GM12878 (cell line): ENCODE measurements at regions of chr2 and their contacts with region 1.

Region 1: GRCh38 chr2:96801005-96801785 is 14.9 kb upstream of the CNNM3 start:
- DNase-seq: no peak
- ATAC-seq: peak; percentile 98
- H3K4me3 ChIP-seq: no peak overlapping the region
- H3K27ac ChIP-seq: no peak overlapping the region
- H3K4me1 ChIP-seq: peaks cover 18% of the 10 kb centered on the region
- H3K27me3 ChIP-seq: no peaks in the 10 kb centered on the region
- CTCF ChIP-seq: peak; percentile 90 to 93 (median 91)
- EP300 ChIP-seq: no peak
- POLR2A ChIP-seq: no peak
- RAD21 ChIP-seq: peak; percentile 82

Region 2: DNA sequence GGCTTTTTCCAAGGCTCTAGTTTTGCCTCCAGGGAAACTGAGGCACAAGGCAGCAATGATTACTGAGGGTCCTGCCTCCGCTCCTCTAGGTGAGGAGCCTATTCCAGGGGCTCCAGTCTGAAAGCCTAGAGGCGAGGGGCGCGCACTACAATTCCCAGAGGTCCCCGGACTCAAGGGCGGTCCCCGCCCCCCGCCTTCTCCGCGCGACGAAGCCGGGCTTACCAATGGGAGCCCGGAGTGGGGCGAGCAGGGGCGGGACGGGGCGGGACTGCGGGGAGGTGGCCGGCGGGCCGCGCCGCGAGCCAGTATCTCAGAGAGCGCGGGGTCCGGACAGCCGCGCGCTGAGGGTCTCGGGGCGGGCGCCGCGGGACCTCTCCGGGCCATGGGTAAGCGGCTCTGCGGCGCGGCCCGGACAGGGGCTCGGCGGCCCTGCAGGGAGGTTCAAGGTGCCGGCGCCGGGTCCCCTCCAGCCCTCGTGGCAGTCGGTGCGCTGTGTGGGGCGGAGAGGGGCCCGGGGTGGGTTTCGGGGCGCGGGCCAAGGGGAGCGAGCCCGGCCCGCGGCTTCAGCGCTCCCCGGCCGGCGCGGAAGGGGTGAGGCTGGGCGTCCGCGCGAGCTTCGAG is 264.6 kb before region 1 on chr2 and contains the start of gene ARID5A:
- CTCF ChIA-PET with region 1: no interaction called
- POLR2A ChIA-PET with region 1: no interaction called
- RAD21 ChIA-PET with region 1: no interaction called
- SMC1A ChIA-PET with region 1: no interaction called
- in situ Hi-C with region 1: no loop called
- intact Hi-C with region 1: no loop called
- DNase-seq: peak; percentile 44
- ATAC-seq: peak; percentile 78
- H3K4me3 ChIP-seq: peak within 1 kb of the TSS; percentile 94
- H3K27ac ChIP-seq: peak within 1 kb of the TSS; percentile 92
- H3K4me1 ChIP-seq: peaks cover 43% of the 10 kb centered on the region
- H3K27me3 ChIP-seq: no peaks in the 10 kb centered on the region
- CTCF ChIP-seq: peak in 1 of 3 experiments; percentile 26; a peak in 1 of 6 replicates
- EP300 ChIP-seq: no peak
- POLR2A ChIP-seq: peak; percentile 90
- RAD21 ChIP-seq: no peak
- polyA plus RNA-seq, gene ARID5A: 0.76 to 3.8 TPM

Region 3: GRCh38 chr2:96638144-96639121 is 162.8 kb before region 1 on chr2 and contains the start of gene KANSL3:
- CTCF ChIA-PET with region 1: no interaction called
- POLR2A ChIA-PET with region 1: interaction called, 3 read pairs
- RAD21 ChIA-PET with region 1: no interaction called
- SMC1A ChIA-PET with region 1: no interaction called
- in situ Hi-C with region 1: no loop called
- intact Hi-C with region 1: loop called (anchors 5 kb)
- DNase-seq: peak; percentile 64
- ATAC-seq: peak; percentile 76
- H3K4me3 ChIP-seq: peak within 1 kb of the TSS; percentile 89
- H3K27ac ChIP-seq: peak within 1 kb of the TSS; percentile 84
- H3K4me1 ChIP-seq: no peaks in the 10 kb centered on the region; the same call in 1 of the 2 replicates
- H3K27me3 ChIP-seq: no peaks in the 10 kb centered on the region
- CTCF ChIP-seq: no peak
- EP300 ChIP-seq: peak in 1 of 2 experiments; percentile 66; a peak in 1 of 4 replicates
- POLR2A ChIP-seq: peak; percentile 99
- RAD21 ChIP-seq: no peak
- polyA plus RNA-seq, gene KANSL3: 5.6 to 6.6 TPM

Region 4: DNA sequence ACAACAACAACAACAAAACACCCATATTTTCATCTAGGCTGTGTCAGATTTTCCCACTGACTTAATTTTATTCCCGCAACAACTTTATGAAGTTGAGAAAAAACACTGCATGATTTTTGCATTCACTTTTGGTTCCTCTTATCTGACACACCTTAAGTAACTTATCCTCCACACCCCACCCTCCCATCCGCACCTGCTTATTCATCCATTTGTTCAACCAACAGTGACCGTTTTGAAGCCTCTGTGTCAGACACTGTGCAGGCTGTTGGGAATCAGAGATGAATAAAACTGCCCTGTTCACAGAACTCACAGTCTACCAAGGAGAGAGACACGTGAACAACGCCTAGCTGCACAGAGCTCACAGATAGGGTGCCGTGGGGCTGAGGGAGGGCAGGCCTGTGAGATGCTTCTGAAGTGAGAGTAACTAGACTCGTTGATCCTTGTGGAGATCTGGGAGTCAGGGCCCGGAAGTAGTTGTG is 33.1 kb before region 1 on chr2:
- CTCF ChIA-PET with region 1: interaction called, 42 read pairs
- POLR2A ChIA-PET with region 1: interaction called, 3 read pairs
- RAD21 ChIA-PET with region 1: interaction called, 15 read pairs
- SMC1A ChIA-PET with region 1: interaction called, 16 read pairs
- in situ Hi-C with region 1: no loop called
- intact Hi-C with region 1: loop called (anchors 2 kb)
- DNase-seq: peak; percentile 66
- ATAC-seq: peak; percentile 57
- H3K4me3 ChIP-seq: peak overlapping the region; percentile 76
- H3K27ac ChIP-seq: peak overlapping the region; percentile 68
- H3K4me1 ChIP-seq: peaks cover 47% of the 10 kb centered on the region
- H3K27me3 ChIP-seq: no peaks in the 10 kb centered on the region
- CTCF ChIP-seq: no peak
- EP300 ChIP-seq: no peak
- POLR2A ChIP-seq: peak; percentile 45; the same call in 1 of the 2 replicates
- RAD21 ChIP-seq: no peak

Region 5: GRCh38 chr2:96816128-96816835 is 15.1 kb after region 1 on chr2 and contains the start of gene CNNM3:
- CTCF ChIA-PET with region 1: interaction called, 12 read pairs
- POLR2A ChIA-PET with region 1: no interaction called
- RAD21 ChIA-PET with region 1: interaction called, 3 read pairs
- SMC1A ChIA-PET with region 1: interaction called, 4 read pairs
- in situ Hi-C with region 1: no loop called
- intact Hi-C with region 1: no loop called
- DNase-seq: no peak
- ATAC-seq: peak; percentile 97
- H3K4me3 ChIP-seq: peak within 1 kb of the TSS; percentile 96
- H3K27ac ChIP-seq: peak within 1 kb of the TSS; percentile 50
- H3K4me1 ChIP-seq: peaks cover 12% of the 10 kb centered on the region
- H3K27me3 ChIP-seq: no peaks in the 10 kb centered on the region
- CTCF ChIP-seq: peak; percentile 32 to 52 (median 52); a peak in 5 of 6 replicates
- EP300 ChIP-seq: no peak
- POLR2A ChIP-seq: peak; percentile 94
- RAD21 ChIP-seq: no peak
- polyA plus RNA-seq, gene CNNM3: 0.72 to 1.9 TPM